Dendritic cell treated with granulocyte-macrophage colony-stimulating factor and Interleukin-4, amounts not matched to agents 40 ng/mL and 50 ng/mL, for 4 days (primary cell): ENCODE measurements at regions of chr7 and their contacts with region 1.

Region 1: GRCh38 chr7:105101864-105102263 is 87.9 kb downstream of the KMT2E start:
- H3K4me3 Mint-ChIP-seq: no peak overlapping the region
- H3K27ac Mint-ChIP-seq: no peak overlapping the region
- H3K4me1 Mint-ChIP-seq: no peaks in the 10 kb centered on the region
- H3K27me3 Mint-ChIP-seq: no peaks in the 10 kb centered on the region

Region 2: GRCh38 chr7:105067691-105068090 is 34.2 kb before region 1 on chr7:
- intact Hi-C with region 1: loop called (anchors 5 kb)
- H3K4me3 Mint-ChIP-seq: no peak overlapping the region
- H3K27ac Mint-ChIP-seq: no peak overlapping the region
- H3K4me1 Mint-ChIP-seq: no peaks in the 10 kb centered on the region
- H3K27me3 Mint-ChIP-seq: no peaks in the 10 kb centered on the region